ENCODE measurements at regions of chr6 and their contacts with region 1.

Region 1: DNA sequence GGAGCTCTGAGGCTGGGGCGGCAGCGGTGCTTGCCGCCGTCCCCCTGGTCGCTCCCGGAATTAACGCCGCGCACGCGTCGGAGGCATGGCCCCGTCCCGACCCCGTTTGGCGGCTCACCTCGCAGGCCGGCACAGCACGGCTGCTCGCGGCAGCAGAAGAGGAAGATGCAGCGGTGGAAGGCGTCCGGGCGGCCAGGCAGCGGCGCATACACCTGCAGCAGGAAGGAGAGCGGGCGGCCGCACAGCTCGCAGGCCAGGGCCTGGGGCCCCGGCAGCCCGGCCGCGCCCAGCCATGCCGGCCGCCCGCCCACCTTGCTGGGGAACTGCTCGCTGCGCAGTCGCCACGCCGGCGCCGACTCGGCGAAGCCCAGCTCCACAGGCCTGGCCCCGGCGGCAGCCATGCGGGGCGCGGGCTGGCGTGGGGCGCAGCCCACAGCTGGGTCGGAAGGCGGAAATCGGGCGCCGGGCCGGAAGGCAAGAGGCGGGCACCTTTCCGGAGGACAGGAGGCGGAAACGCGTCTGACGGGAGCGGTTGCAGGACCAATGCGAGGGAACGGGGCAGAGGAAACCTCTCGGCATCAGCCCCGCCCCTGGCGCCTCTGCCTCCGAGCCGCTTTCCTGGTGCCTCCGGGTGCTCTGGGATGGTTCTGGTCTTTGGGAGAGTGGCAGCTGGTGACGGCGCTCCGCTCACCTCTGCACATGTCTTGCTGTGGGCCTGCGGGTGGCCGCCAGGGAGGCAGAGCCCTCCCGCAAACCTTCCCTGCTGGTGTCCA is at the start of gene PDCD2:
- DNase-seq: peak; percentile 80 to 96
- ATAC-seq: peak; percentile 92 to 98 (median 94)
- H3K4me3 ChIP-seq: peak within 1 kb of the TSS; percentile 75
- H3K4me3 Mint-ChIP-seq: peak within 1 kb of the TSS; percentile 97
- H3K27ac ChIP-seq: peak within 1 kb of the TSS; percentile 87
- H3K27ac Mint-ChIP-seq: peak within 1 kb of the TSS; percentile 95 to 97
- H3K4me1 ChIP-seq: peaks cover 13% of the 10 kb centered on the region
- H3K4me1 Mint-ChIP-seq: peaks cover 32 to 37% of the 10 kb centered on the region in 2 donors
- H3K27me3 ChIP-seq: no peaks in the 10 kb centered on the region
- H3K27me3 Mint-ChIP-seq: peaks cover 3 to 16% of the 10 kb centered on the region in 2 donors
- CTCF ChIP-seq: no peak
- total RNA-seq, gene PDCD2: 40.4 to 58.4 (median 42.2) TPM

Region 2: DNA sequence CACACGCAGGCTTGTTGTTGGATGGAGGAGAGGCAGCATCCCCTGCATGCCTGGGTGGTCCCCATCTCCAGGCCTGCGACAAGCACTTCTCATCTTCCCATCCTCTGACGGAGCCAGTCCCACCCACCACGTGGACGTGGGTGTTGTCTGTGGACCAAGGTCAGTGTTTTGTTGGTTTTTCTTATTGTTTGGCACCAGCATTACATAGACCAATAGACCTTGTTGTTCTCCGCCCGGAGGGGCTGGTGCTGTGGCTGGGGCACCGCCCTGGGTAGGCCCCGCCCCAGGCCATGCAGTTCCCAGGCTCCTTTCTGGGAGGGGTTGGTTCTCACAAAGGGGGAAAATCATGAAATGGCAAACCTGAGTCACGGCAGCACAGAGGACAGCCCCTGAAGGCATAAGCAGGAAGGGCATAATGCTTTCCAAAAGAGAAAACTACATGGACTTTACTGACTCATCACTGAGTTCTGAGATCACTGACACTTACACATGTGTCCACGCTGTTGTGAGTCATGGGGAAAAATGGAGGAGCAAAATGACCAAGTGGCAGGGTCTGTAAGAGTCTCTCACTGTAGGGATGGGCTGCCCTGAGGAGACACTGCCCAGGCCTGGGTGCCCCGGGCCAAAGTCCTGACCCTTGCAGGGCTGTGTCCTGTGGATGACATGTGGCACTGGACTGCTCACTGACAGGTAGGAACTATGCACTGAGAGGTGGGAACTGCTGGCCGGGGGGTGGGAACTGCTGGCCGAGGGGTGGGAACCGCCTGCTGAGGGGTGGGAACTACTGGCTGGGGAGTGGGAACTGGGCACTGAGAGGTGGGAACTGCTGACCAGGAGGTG is 1421.4 kb before region 1 on chr6:
- intact Hi-C with region 1: no loop called
- DNase-seq: no peak
- ATAC-seq: no peak
- H3K4me3 ChIP-seq: no peak overlapping the region
- H3K4me3 Mint-ChIP-seq: no peak overlapping the region
- H3K27ac ChIP-seq: no peak overlapping the region
- H3K27ac Mint-ChIP-seq: no peak overlapping the region
- H3K4me1 ChIP-seq: no peaks in the 10 kb centered on the region
- H3K4me1 Mint-ChIP-seq: no peaks in the 10 kb centered on the region
- H3K27me3 ChIP-seq: no peaks in the 10 kb centered on the region
- H3K27me3 Mint-ChIP-seq: peaks cover 0 to 5% of the 10 kb centered on the region in 2 donors
- CTCF ChIP-seq: no peak

Region 3: GRCh38 chr6:170554013-170554795 is 30.2 kb before region 1 on chr6 and contains the start of gene TBP:
- intact Hi-C with region 1: loop called (anchors 1 kb)
- DNase-seq: peak; percentile 98 to 99
- ATAC-seq: peak; percentile 88 to 97 (median 92)
- H3K4me3 ChIP-seq: peak within 1 kb of the TSS; percentile 84
- H3K4me3 Mint-ChIP-seq: no peak within 1 kb of the TSS
- H3K27ac ChIP-seq: peak within 1 kb of the TSS; percentile 93
- H3K27ac Mint-ChIP-seq: no peak within 1 kb of the TSS
- H3K4me1 ChIP-seq: peaks cover 22% of the 10 kb centered on the region
- H3K4me1 Mint-ChIP-seq: peaks cover 5 to 31% of the 10 kb centered on the region in 2 donors
- H3K27me3 ChIP-seq: no peaks in the 10 kb centered on the region
- H3K27me3 Mint-ChIP-seq: no peaks in the 10 kb centered on the region
- CTCF ChIP-seq: no peak
- total RNA-seq, gene TBP: 13.0 to 18.4 (median 14.2) TPM